ENCODE measurements at regions of chr17 and their contacts with region 1.

Region 1: GRCh38 chr17:48804925-48805411 is 12.1 kb downstream of the TTLL6 start:
- DNase-seq: peak; percentile 67 to 73
- ATAC-seq: peak; percentile 51

Region 2: DNA sequence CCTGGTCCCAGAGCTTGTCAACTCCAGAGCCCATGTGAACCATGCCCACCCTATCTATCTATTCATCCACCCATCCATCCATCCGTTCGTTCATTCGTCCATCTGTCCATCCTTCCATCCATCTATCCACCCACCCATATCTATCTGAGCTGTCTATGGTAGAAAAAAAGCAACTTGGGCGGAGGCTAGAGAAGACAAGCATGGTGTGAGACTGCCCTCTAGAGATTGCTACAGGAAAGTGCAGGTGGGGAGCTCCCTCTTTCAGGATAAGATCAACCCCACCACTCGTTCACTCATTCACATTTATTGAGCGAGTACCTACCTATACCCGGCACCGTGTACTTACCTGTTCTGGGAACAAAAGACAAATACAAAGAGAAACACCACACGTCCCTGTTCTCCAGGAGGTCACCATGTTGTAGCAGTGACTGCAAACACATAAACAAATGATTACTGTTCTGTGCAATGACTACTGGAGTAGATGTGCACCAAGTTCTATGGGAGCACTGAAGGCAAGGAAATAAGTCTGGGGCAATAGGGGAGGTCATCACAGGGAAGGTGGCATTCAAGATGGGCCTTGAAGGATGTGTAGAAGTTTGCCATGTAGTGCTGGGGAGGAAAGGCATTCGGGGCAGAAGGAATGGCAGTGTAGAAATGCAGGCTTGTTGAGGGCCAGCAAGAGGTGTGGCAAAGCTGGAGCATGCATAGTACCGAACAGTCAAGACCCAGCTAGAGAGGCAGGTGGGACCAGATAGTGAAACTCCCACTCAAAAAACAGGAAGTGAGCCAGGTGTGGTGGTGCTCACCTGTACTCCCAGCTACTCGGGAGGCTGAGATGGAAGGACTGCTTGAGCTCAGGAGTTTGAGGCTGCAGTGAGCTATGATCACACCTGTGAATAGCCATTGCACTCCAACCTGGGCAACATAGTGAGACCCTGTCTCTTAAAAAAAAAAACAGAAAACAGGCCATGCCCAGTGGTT is 74.2 kb after region 1 on chr17:
- intact Hi-C with region 1: loop called in 1 of 2 experiments (anchors 2 kb)
- DNase-seq: peak in 1 of 2 donors; percentile 41
- ATAC-seq: peak; percentile 78

Region 3: GRCh38 chr17:48981927-48982539 is 177.1 kb after region 1 on chr17:
- intact Hi-C with region 1: no loop called
- DNase-seq: no peak
- ATAC-seq: no peak

Region 4: GRCh38 chr17:49031965-49032928 is 227.3 kb after region 1 on chr17:
- intact Hi-C with region 1: loop called in 1 of 2 experiments (anchors 10 kb)
- DNase-seq: peak in 1 of 2 donors; percentile 45
- ATAC-seq: peak; percentile 92

Measured in left colon (tissue), 2 donors.